A673 (cell line): ENCODE measurements at regions of chr6 and their contacts with region 1.

Region 1: GRCh38 chr6:68892452-68892851 is 257.4 kb downstream of the ADGRB3 start:
- DNase-seq: no peak
- H3K4me3 ChIP-seq: no peak overlapping the region
- H3K27ac ChIP-seq: no peak overlapping the region
- H3K4me1 ChIP-seq: no peaks in the 10 kb centered on the region
- H3K27me3 ChIP-seq: no peaks in the 10 kb centered on the region
- CTCF ChIP-seq: no peak

Region 2: DNA sequence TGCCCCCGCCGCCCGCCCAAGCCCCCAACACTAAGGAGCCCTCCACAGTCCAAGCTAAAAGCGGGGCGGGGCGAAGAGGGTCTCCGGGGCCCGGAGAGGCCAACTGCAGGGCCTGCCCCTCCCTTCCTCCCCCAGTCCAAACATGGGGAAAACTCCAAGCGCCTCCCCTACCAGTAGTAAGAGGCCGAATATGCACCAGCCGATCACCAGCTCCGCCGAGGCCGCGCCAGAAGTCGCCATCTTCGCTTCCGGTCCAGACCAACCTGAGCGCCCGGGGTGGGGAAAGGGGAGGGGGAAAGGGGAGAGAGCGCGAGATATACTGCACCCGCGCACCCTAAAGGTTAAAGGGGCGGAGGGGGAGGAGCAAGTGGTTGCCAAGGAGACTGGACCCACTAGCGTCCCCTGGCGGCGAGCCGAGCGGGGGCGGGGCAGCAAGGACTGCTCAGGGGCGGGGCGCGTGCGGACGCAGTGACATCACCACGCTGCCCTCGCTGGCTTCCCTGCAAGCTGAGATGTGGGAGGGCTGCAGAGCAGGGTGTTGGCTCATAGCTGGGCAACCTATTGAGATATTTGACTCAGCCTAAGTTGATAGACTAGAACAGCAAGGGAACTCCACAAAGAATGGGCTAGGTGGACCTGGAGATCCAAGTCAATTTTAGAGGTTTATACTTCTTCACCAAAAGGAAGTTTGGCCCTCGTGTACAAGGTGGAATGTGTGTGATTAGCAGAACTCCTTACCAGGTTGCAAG is 904.4 kb after region 1 on chr6 and contains the start of gene LMBRD1:
- CTCF ChIA-PET with region 1: interaction called, 12 read pairs
- POLR2A ChIA-PET with region 1: no interaction called
- intact Hi-C with region 1: no loop called
- DNase-seq: peak; percentile 95
- H3K4me3 ChIP-seq: peak within 1 kb of the TSS; percentile 92
- H3K27ac ChIP-seq: peak within 1 kb of the TSS; percentile 82
- H3K4me1 ChIP-seq: peaks cover 7% of the 10 kb centered on the region
- H3K27me3 ChIP-seq: no peaks in the 10 kb centered on the region
- CTCF ChIP-seq: peak; percentile 95
- total RNA-seq, gene LMBRD1: 19.8 and 21.1 TPM in 2 replicates